A673 (cell line): ENCODE measurements at regions of chr3 and their contacts with region 1.

Region 1: GRCh38 chr3:6799264-6799915 is 61.5 kb upstream of the GRM7 start:
- DNase-seq: peak; percentile 41
- H3K4me3 ChIP-seq: no peak overlapping the region
- H3K27ac ChIP-seq: no peak overlapping the region
- H3K4me1 ChIP-seq: no peaks in the 10 kb centered on the region
- H3K27me3 ChIP-seq: no peaks in the 10 kb centered on the region
- CTCF ChIP-seq: peak; percentile 84

Region 2: GRCh38 chr3:5226783-5227182 is 1572.6 kb before region 1 on chr3:
- CTCF ChIA-PET with region 1: no interaction called
- POLR2A ChIA-PET with region 1: no interaction called
- intact Hi-C with region 1: loop called (anchors 2 kb)
- DNase-seq: peak; percentile 51
- H3K4me3 ChIP-seq: no peak overlapping the region
- H3K27ac ChIP-seq: no peak overlapping the region
- H3K4me1 ChIP-seq: no peaks in the 10 kb centered on the region
- H3K27me3 ChIP-seq: no peaks in the 10 kb centered on the region
- CTCF ChIP-seq: peak; percentile 55

Region 3: DNA sequence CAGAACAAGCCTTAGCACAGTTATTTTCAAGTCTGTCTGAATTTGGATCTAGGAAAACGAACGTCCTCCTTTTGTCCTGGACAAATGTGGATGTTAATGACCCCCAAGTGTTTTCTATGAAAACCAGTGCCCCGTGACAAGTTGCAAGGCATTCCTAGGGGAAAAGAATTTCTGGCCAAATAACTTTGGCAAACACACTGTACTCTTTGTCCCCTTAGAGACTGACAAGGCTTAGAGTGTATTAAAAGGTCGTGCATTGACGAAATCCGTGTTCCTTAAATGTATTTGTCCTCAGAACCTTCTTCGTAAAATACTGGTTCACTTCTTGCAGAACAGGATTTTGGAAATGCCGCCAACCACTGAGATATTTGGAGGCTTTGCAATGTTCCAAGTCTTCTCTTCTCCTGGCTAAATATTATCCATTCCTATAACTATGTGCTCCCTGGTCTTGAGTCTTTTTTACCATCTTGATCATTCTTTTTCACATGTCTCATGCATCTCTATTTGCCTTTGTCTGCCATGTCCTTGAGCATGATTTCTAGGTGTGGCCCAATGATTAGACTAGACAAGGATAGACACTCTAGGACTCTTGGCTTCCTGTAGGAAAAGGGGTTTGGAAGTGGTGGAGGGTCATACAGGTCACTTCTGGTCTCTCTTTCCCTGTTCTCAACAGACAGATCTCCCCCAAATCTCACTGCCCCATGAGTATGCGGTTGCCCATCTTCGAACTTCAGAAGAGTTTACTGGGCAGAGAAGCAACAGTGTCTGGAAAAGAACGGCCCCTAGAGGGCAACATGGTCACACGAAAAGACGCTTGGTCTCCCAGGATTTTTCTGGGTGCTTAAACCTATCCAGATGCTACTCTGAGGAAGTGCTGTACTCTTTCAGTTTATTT is 1494.4 kb before region 1 on chr3:
- CTCF ChIA-PET with region 1: no interaction called
- POLR2A ChIA-PET with region 1: no interaction called
- intact Hi-C with region 1: loop called (anchors 5 kb)
- DNase-seq: peak; percentile 57
- H3K4me3 ChIP-seq: no peak overlapping the region
- H3K27ac ChIP-seq: no peak overlapping the region
- H3K4me1 ChIP-seq: no peaks in the 10 kb centered on the region
- H3K27me3 ChIP-seq: peaks cover 7% of the 10 kb centered on the region
- CTCF ChIP-seq: peak; percentile 75

Region 4: GRCh38 chr3:5426094-5426883 is 1373.1 kb before region 1 on chr3:
- CTCF ChIA-PET with region 1: no interaction called
- POLR2A ChIA-PET with region 1: no interaction called
- intact Hi-C with region 1: loop called (anchors 2 kb)
- DNase-seq: peak; percentile 83
- H3K4me3 ChIP-seq: no peak overlapping the region
- H3K27ac ChIP-seq: no peak overlapping the region
- H3K4me1 ChIP-seq: no peaks in the 10 kb centered on the region
- H3K27me3 ChIP-seq: no peaks in the 10 kb centered on the region
- CTCF ChIP-seq: peak; percentile 93

Region 5: GRCh38 chr3:7144696-7145308 is 345.4 kb after region 1 on chr3:
- CTCF ChIA-PET with region 1: no interaction called
- POLR2A ChIA-PET with region 1: no interaction called
- intact Hi-C with region 1: loop called (anchors 10 kb)
- DNase-seq: peak; percentile 58
- H3K4me3 ChIP-seq: no peak overlapping the region
- H3K27ac ChIP-seq: no peak overlapping the region
- H3K4me1 ChIP-seq: no peaks in the 10 kb centered on the region
- H3K27me3 ChIP-seq: peaks cover 5% of the 10 kb centered on the region
- CTCF ChIP-seq: peak; percentile 86